ENCODE measurements at regions of chr7 and their contacts with region 1.

Region 1: GRCh38 chr7:93902777-93903423 is 3.5 kb upstream of the GNGT1 start:
- DNase-seq: peak; percentile 75
- ATAC-seq: peak; percentile 85
- H3K4me3 ChIP-seq: no peak overlapping the region
- H3K27ac ChIP-seq: no peak overlapping the region
- H3K4me1 ChIP-seq: peaks cover 2% of the 10 kb centered on the region; the same call in 1 of the 2 replicates
- H3K27me3 ChIP-seq: no peaks in the 10 kb centered on the region
- CTCF ChIP-seq: peak; percentile 86
- POLR2A ChIP-seq: no peak
- RAD21 ChIP-seq: peak; percentile 84

Region 2: DNA sequence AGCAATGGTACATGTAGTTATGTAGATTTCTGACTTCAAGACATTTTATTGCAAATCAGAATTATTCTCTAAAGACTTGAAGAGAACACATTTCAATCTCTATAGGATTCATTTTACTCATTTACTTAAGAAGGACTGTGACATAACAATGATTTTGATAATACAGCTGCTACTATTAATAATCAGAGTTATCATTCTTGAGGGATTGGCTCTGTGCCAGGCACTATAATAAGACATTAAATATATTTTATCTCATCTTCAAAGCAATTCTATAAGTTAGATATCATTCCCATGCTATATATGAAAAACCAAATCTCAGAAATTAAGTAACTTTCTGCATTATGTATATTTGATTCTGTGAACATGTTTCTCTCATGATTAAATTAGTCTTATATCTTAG is 224.7 kb before region 1 on chr7:
- CTCF ChIA-PET with region 1: no interaction called
- POLR2A ChIA-PET with region 1: no interaction called
- dilution Hi-C with region 1: no loop called
- in situ Hi-C with region 1: no loop called
- intact Hi-C with region 1: no loop called
- DNase-seq: no peak
- ATAC-seq: no peak
- H3K4me3 ChIP-seq: no peak overlapping the region
- H3K27ac ChIP-seq: no peak overlapping the region
- H3K4me1 ChIP-seq: no peaks in the 10 kb centered on the region
- H3K27me3 ChIP-seq: no peaks in the 10 kb centered on the region
- CTCF ChIP-seq: no peak
- POLR2A ChIP-seq: no peak
- RAD21 ChIP-seq: no peak

Region 3: GRCh38 chr7:93715234-93715633 is 187.7 kb before region 1 on chr7:
- CTCF ChIA-PET with region 1: no interaction called
- POLR2A ChIA-PET with region 1: no interaction called
- dilution Hi-C with region 1: no loop called
- in situ Hi-C with region 1: no loop called
- intact Hi-C with region 1: loop called (anchors 5 kb)
- DNase-seq: peak; percentile 39
- ATAC-seq: peak; percentile 82
- H3K4me3 ChIP-seq: no peak overlapping the region
- H3K27ac ChIP-seq: no peak overlapping the region
- H3K4me1 ChIP-seq: no peaks in the 10 kb centered on the region
- H3K27me3 ChIP-seq: no peaks in the 10 kb centered on the region; the same call in 1 of the 2 replicates
- CTCF ChIP-seq: peak; percentile 62
- POLR2A ChIP-seq: no peak
- RAD21 ChIP-seq: peak; percentile 63

Region 4: DNA sequence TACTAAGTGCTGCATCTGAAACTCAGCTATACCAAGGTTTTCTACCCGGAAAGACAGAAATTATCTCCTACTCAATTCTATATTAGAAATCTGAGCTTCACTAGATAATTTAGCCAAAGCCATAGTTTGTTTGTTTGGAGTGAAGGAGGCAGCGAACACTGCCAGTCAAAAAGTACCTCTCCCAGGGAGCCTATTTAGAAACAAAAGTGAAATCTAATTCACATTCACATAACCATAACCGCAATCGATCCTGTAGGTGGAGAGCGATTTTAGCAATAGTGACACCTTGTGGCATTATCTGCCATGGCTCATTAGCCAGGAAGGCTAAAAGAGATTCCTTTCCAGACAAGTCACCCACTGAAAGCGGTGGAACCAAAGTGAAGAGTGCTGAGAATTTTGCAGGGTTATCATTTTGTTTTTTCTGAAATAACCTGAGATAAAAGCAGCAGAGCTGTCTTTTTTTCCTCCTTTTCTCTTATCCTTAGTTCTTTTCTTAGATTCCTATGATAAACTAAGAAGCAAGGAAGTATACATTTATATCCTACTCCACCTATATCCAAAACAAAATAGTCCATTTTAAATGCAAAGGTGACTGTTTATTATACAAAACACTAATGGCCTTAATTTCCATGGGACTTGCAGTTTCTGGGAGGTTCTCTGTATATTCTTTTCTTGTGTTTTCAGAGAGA is 184.9 kb after region 1 on chr7:
- CTCF ChIA-PET with region 1: interaction called, 10 read pairs
- POLR2A ChIA-PET with region 1: no interaction called
- dilution Hi-C with region 1: no loop called
- in situ Hi-C with region 1: no loop called
- intact Hi-C with region 1: loop called (anchors 1 kb)
- DNase-seq: peak; percentile 85
- ATAC-seq: peak; percentile 87
- H3K4me3 ChIP-seq: peak overlapping the region; percentile 15; the same call in 1 of the 2 replicates
- H3K27ac ChIP-seq: no peak overlapping the region
- H3K4me1 ChIP-seq: peaks cover 9% of the 10 kb centered on the region
- H3K27me3 ChIP-seq: no peaks in the 10 kb centered on the region
- CTCF ChIP-seq: peak; percentile 78
- POLR2A ChIP-seq: no peak
- RAD21 ChIP-seq: peak; percentile 84

Region 5: DNA sequence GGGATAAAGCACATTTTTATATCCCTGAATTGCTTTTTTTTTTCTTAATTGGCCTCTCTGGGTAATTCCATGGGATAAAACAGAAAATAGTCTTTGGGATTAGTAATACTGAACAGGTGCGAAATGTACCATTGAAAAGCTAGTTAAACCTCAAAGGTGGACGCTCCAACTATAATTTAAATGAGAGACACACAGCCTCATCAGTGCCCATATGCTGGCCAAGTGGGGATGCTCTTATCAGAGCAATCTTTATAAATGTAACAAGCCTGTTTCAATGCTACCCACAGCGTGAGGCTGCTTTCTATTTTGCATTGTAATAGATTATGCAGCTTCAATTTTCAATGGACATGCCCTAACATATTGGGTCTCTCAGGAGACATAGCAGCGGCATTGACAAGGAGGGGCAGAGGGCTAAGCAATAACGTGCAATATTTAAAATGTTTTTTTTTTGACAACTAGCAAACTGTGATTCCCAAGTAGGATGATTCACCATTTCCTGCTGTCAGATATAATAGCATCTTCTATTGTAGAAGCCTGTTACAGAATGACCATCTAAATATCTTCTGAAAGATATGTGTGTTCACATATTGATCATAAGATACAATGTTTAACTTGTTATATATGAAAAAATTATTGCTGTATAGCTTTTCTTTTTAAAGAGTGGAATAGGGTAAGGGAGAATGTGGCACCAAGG is 192.6 kb after region 1 on chr7:
- CTCF ChIA-PET with region 1: no interaction called
- POLR2A ChIA-PET with region 1: no interaction called
- dilution Hi-C with region 1: no loop called
- in situ Hi-C with region 1: loop called (anchors 5 kb)
- intact Hi-C with region 1: no loop called
- DNase-seq: no peak
- ATAC-seq: no peak
- H3K4me3 ChIP-seq: no peak overlapping the region
- H3K27ac ChIP-seq: no peak overlapping the region
- H3K4me1 ChIP-seq: peaks cover 2% of the 10 kb centered on the region
- H3K27me3 ChIP-seq: no peaks in the 10 kb centered on the region
- CTCF ChIP-seq: no peak
- POLR2A ChIP-seq: no peak
- RAD21 ChIP-seq: no peak

Region 6: GRCh38 chr7:94212160-94212559 is 309.3 kb after region 1 on chr7:
- CTCF ChIA-PET with region 1: no interaction called
- POLR2A ChIA-PET with region 1: no interaction called
- dilution Hi-C with region 1: no loop called
- in situ Hi-C with region 1: loop called (anchors 5 kb)
- intact Hi-C with region 1: no loop called
- DNase-seq: no peak
- ATAC-seq: no peak
- H3K4me3 ChIP-seq: no peak overlapping the region
- H3K27ac ChIP-seq: no peak overlapping the region
- H3K4me1 ChIP-seq: no peaks in the 10 kb centered on the region; the same call in 1 of the 2 replicates
- H3K27me3 ChIP-seq: no peaks in the 10 kb centered on the region
- CTCF ChIP-seq: no peak
- POLR2A ChIP-seq: no peak
- RAD21 ChIP-seq: no peak

Region 7: GRCh38 chr7:94276795-94277194 is 373.9 kb after region 1 on chr7:
- CTCF ChIA-PET with region 1: no interaction called
- POLR2A ChIA-PET with region 1: no interaction called
- dilution Hi-C with region 1: no loop called
- in situ Hi-C with region 1: no loop called
- intact Hi-C with region 1: loop called (anchors 5 kb)
- DNase-seq: peak; percentile 59
- ATAC-seq: peak; percentile 87
- H3K4me3 ChIP-seq: no peak overlapping the region
- H3K27ac ChIP-seq: no peak overlapping the region
- H3K4me1 ChIP-seq: no peaks in the 10 kb centered on the region; the same call in 1 of the 2 replicates
- H3K27me3 ChIP-seq: 0 out of 2 replicates have a peak, but pooled peaks cover 2% of the 10 kb centered on the region
- CTCF ChIP-seq: peak; percentile 55
- POLR2A ChIP-seq: no peak
- RAD21 ChIP-seq: peak; percentile 63

Region 8: GRCh38 chr7:94436018-94436604 is 533.2 kb after region 1 on chr7:
- CTCF ChIA-PET with region 1: no interaction called
- POLR2A ChIA-PET with region 1: no interaction called
- dilution Hi-C with region 1: no loop called
- in situ Hi-C with region 1: loop called (anchors 25 kb)
- intact Hi-C with region 1: loop called (anchors 10 kb)
- DNase-seq: peak; percentile 78
- ATAC-seq: peak; percentile 43
- H3K4me3 ChIP-seq: no peak overlapping the region
- H3K27ac ChIP-seq: no peak overlapping the region
- H3K4me1 ChIP-seq: peaks cover 8% of the 10 kb centered on the region
- H3K27me3 ChIP-seq: no peaks in the 10 kb centered on the region
- CTCF ChIP-seq: peak; percentile 81
- POLR2A ChIP-seq: no peak
- RAD21 ChIP-seq: peak; percentile 68

Measured in IMR-90 (cell line).